ENCODE measurements at regions of chr1 and their contacts with region 1.

Region 1: DNA sequence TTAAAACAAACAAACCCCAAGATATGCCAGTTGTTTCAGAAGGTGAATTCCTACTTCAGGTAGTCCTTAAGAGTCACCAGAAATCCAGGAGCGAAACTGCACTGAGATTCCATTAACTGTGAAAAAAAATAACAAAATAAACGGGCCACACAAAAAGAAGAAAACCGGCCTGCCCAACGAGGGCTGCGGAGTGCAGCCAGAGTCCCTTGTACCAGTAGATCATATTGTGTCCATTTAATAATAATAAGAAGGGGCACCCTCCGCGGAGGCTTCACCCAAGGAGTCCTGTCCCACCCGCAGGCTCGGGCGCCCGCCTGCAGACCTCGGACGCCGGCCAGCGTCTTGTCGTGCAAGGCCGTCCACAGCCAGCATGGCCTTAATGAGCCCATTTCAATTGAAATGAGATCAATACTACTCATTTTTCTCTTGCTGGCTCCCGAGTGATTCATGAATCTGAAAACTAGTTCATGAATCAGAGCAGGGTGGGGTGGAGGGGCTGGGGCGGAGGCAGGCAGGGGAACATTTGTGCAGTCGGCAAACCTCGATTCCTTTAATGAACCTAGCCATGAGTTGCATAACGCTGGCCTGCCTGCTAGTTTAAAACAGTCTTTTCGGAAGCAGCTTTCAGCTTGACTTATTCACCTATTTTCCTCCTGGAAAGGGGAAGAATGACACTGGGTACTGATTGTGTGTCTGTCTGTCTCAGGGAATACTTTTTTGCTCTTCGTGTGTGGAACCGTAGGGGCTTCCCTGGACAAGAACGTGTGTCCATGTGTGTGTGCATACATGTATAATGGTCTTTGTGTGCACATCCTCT is 113.1 kb upstream of the IRF2BP2 start:
- DNase-seq: peak; percentile 81
- ATAC-seq: peak in 1 of 2 donors; percentile 52

Region 2: DNA sequence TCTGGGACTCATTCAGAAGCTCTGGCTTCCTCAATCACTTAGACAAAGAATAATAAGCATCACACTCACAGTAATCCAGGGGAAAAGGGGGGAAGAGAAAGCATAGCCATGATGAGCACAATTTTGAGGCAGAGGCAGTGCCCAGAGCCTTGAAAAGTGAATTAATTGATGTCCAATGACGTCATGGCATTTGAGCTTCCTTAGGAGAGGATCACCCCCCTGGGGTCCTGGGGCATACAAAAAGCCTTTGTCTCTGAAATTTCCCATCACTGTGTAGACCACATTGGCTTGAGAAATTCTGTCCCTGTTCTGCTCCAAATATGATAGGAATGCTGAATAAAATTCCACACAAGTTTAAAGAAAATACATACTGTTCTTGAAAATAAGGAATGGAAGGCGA is 434.2 kb before region 1 on chr1:
- intact Hi-C with region 1: no loop called
- DNase-seq: no peak
- ATAC-seq: no peak

Region 3: GRCh38 chr1:234499119-234499942 is 223.8 kb before region 1 on chr1:
- intact Hi-C with region 1: loop called in 1 of 2 experiments (anchors 10 kb)
- DNase-seq: peak; percentile 92
- ATAC-seq: peak; percentile 95 to 96

Region 4: DNA sequence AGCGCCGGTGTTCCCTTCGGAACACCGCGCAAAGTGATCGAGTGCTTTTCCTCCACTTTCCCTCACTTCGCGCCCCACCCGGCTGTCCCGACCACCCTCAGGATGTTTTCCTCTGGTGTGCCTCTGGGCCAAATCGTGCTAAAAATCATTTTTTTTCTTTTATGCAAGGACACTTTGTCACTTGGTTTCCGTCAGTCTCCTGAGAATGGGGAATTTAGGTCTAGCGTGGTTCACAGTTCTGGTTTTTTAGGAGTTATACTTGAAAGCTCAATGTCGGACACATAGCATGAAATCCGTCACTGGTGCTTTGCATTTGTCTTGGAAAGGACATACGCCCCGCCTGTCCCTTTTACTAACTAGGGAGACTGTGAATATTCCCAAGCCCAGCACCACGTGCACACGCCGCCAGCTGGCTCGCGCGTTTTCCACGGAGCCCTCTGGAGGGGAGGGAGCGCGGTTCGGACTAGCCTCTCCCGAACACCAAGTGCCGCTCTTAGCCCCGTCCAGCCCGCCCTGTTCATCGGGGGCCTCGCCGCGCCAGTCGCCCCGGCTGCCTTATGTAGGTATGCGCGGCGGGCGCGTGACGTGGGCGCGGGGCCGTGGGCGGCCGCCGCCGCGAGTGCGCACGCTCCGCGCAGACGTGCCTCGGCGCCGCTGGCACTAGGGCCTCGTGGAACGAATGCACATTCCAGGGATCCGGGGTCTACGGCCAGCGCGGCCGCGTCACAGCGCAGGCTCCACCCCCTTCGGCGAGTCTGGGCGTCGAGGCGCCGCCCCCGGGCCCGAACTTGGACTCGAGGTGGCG is 112.6 kb before region 1 on chr1:
- intact Hi-C with region 1: loop called (anchors 2 to 5 kb)
- DNase-seq: peak; percentile 97
- ATAC-seq: peak; percentile 79 to 85

Region 5: GRCh38 chr1:234887016-234887900 is 164.1 kb after region 1 on chr1:
- intact Hi-C with region 1: loop called (anchors 2 to 10 kb)
- DNase-seq: peak; percentile 74
- ATAC-seq: peak; percentile 72 to 77

Region 6: GRCh38 chr1:234978397-234979295 is 255.5 kb after region 1 on chr1:
- intact Hi-C with region 1: loop called in 1 of 2 experiments (anchors 5 kb)
- DNase-seq: peak; percentile 58
- ATAC-seq: peak; percentile 35 to 43

Region 7: GRCh38 chr1:235075188-235075926 is 352.2 kb after region 1 on chr1:
- intact Hi-C with region 1: loop called (anchors 2 to 5 kb)
- DNase-seq: peak; percentile 85
- ATAC-seq: peak; percentile 60 to 74